ENCODE measurements at regions of chr4 and their contacts with region 1.

Region 1: DNA sequence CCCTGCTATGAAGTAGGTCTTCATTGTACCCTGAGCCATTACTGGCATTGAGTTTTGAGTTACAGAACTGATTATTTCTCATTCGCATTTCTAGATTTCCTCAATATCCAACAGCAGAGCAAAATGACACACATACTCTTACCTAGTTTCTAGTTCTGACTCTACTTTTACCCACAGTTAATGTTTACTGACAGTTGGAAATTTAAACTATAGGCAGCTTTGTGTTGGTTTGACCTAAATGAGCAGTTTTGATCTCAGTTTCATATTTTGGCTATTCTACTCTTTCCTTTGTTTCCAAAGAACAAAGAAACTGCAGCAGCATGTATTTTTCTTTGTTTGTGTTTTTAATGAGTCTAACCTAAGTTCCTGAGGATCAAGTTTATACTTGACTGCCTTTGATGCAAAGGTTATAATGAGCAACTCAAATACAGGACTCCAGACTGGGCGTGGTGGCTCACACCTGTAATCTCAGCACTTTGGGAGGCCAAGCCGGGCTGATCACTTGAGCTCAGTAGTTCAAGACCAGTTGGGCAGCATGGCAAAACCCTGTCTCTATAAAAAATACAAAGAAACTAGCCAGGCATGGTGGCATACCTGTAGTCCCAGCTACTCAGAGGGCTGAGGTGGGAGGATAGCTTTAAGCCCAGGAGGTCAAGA is 30.4 kb downstream of the TXK start:
- DNase-seq: no peak
- H3K4me3 Mint-ChIP-seq: no peak overlapping the region
- H3K27ac Mint-ChIP-seq: peak overlapping the region; percentile 54
- H3K4me1 Mint-ChIP-seq: peaks cover 15% of the 10 kb centered on the region
- H3K27me3 Mint-ChIP-seq: no peaks in the 10 kb centered on the region

Region 2: DNA sequence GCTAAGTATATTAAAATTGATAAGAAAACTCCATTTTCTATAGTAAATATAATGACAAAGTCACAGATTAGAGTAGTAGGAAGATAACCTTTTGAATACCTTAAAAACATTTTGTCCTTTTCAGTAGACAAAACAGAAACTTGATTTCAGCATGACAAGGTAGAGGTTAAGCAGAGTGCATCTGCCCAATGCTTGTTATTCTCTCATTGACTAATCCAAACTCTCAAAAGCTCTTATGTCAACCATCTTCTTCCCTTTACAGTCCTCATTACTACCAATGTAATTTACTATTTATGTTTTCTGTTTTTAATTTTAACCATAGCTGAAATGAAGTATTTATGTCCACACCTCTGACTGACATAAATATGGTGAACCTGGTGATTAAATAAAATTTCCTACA is 76.0 kb before region 1 on chr4:
- intact Hi-C with region 1: loop called (anchors 2 kb)
- DNase-seq: no peak
- H3K4me3 Mint-ChIP-seq: no peak overlapping the region
- H3K27ac Mint-ChIP-seq: no peak overlapping the region
- H3K4me1 Mint-ChIP-seq: peaks cover 20% of the 10 kb centered on the region
- H3K27me3 Mint-ChIP-seq: peaks cover 30% of the 10 kb centered on the region

Region 3: GRCh38 chr4:48047421-48047844 is 56.2 kb before region 1 on chr4:
- intact Hi-C with region 1: loop called (anchors 2 kb)
- DNase-seq: peak; percentile 48
- H3K4me3 Mint-ChIP-seq: peak overlapping the region; percentile 34
- H3K27ac Mint-ChIP-seq: peak overlapping the region; percentile 3
- H3K4me1 Mint-ChIP-seq: peaks cover 32% of the 10 kb centered on the region
- H3K27me3 Mint-ChIP-seq: peaks cover 72% of the 10 kb centered on the region

Region 4: DNA sequence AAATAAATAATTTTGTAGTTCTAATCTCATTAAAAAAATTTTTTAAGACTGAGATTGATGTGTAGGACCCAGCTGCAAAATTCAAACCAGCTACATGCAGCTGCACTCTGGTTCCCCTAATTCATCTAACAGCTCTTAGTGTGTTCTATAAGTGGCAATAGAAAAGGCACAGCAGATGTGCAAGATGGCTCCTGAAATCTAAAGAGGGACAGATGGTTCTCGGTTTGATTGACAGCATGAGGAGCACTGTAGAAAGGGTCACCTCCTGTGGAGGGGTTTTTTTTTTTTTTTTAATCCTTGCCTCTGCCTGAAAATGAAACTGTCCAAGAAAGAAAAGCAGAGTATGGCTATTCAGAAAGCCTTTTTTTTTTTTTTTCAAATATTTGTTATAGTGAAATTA is 710.4 kb after region 1 on chr4:
- intact Hi-C with region 1: no loop called
- DNase-seq: no peak
- H3K4me3 Mint-ChIP-seq: no peak overlapping the region
- H3K27ac Mint-ChIP-seq: no peak overlapping the region
- H3K4me1 Mint-ChIP-seq: peaks cover 5% of the 10 kb centered on the region
- H3K27me3 Mint-ChIP-seq: peaks cover 10% of the 10 kb centered on the region